ENCODE measurements at regions of chr7 and their contacts with region 1.

Region 1: DNA sequence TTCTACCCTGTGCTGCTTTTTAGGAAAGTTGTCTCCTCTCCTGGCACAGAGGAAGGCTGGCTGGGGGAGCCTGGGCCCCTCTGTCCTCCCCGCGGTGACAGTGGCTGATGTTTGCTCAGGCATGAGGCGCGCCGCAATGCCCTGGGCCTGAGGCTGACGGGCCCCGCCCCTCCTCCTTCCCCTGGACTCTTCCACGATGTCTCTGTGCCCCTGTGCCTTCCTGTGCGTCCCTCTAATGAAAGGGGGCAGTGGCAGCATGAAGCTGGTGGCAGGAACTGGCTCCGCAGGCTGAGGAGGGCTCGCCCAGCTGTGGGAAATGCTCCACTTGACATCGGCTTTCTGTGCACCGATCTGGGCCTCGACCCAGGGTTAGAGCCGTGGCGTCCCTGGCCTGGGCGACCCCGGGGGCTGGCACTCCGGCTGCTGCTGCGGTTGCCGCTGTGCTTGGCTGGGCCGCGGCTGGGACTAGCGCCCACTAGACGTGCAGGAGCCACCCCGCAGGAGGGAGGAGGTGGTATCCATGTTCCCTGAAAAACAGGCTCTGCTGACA is 67.9 kb downstream of the ZNF680 start:
- DNase-seq: peak in 3 of 10 donors; percentile 30 to 52 (median 43)
- H3K4me3 ChIP-seq: peak overlapping the region in 45 of 59 donors; percentile 5 to 57 (median 37)
- H3K27ac ChIP-seq: peak overlapping the region in 8 of 59 donors; percentile 4 to 67 (median 34)
- H3K27me3 ChIP-seq: no peaks in the 10 kb centered on the region
- CTCF ChIP-seq: no peak

Region 2: GRCh38 chr7:64562626-64563275 is 67.8 kb after region 1 on chr7 and contains the start of gene ZNF680:
- intact Hi-C with region 1: loop called in 1 of 2 experiments (anchors 10 kb)
- DNase-seq: peak; percentile 92 to 98 (median 98)
- H3K4me3 ChIP-seq: peak within 1 kb of the TSS; percentile 70 to 98 (median 87)
- H3K27ac ChIP-seq: peak within 1 kb of the TSS; percentile 51 to 94 (median 86)
- H3K27me3 ChIP-seq: no peaks in the 10 kb centered on the region
- CTCF ChIP-seq: peak in 19 of 56 donors; percentile 2 to 41 (median 23)
- total RNA-seq, gene ZNF680: 31.2 to 76.7 (median 49.4) TPM